ENCODE measurements at regions of chr3 and their contacts with region 1.

Region 1: DNA sequence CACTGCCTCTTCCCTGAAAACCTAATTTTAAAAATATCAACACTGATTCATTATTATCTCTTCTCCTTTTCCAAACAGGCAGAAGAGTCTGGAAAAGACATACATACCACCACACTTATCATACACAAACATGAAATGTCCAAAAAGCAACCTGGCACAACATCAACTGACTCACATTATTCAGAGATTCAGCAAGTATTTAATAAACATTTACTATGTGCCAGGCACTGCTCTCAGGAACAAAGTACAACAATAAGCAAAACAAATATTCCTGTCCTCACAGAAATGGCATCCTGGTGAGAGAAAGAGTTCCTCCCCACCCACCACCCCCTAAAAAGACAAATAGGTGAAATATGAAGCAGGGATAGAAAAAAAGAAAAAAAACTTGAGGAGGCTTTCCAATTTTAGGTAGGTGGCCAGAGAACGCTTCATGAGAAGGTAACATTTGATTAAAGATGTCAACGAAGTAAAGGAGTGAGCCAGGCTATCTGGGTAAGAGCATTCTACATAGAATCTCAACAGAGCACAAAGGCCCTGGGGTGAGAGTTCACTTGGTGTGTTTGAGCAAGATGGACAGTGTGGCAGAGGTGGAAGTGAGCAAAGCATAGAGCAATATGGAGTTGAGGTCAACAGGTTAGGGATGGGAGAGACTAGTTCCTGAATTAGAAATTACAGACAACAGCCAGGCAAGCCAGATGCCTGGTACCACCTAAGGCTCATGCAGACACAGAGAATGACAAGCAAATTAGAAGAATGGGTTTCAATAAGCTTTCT is 141.7 kb downstream of the OSBPL10 start:
- DNase-seq: no peak
- ATAC-seq: no peak
- H3K4me3 ChIP-seq: no peak overlapping the region
- H3K4me3 Mint-ChIP-seq: no peak overlapping the region
- H3K27ac ChIP-seq: no peak overlapping the region
- H3K27ac Mint-ChIP-seq: peak overlapping the region; percentile 22
- H3K4me1 ChIP-seq: peaks cover 0 to 10% of the 10 kb centered on the region in 2 donors
- H3K4me1 Mint-ChIP-seq: peaks cover 50% of the 10 kb centered on the region
- H3K27me3 ChIP-seq: no peaks in the 10 kb centered on the region
- H3K27me3 Mint-ChIP-seq: no peaks in the 10 kb centered on the region
- CTCF ChIP-seq: no peak

Region 2: GRCh38 chr3:30059240-30059639 is 1780.1 kb before region 1 on chr3:
- CTCF ChIA-PET with region 1: no interaction called
- POLR2A ChIA-PET with region 1: no interaction called
- intact Hi-C with region 1: loop called (anchors 5 kb)
- DNase-seq: no peak
- ATAC-seq: no peak
- H3K4me3 ChIP-seq: no peak overlapping the region
- H3K4me3 Mint-ChIP-seq: no peak overlapping the region
- H3K27ac ChIP-seq: no peak overlapping the region
- H3K27ac Mint-ChIP-seq: no peak overlapping the region
- H3K4me1 ChIP-seq: no peaks in the 10 kb centered on the region
- H3K4me1 Mint-ChIP-seq: no peaks in the 10 kb centered on the region
- H3K27me3 ChIP-seq: no peaks in the 10 kb centered on the region
- H3K27me3 Mint-ChIP-seq: peaks cover 2% of the 10 kb centered on the region
- CTCF ChIP-seq: no peak

Region 3: GRCh38 chr3:33758864-33759263 is 1919.5 kb after region 1 on chr3:
- CTCF ChIA-PET with region 1: no interaction called
- POLR2A ChIA-PET with region 1: no interaction called
- intact Hi-C with region 1: no loop called
- DNase-seq: no peak
- ATAC-seq: no peak
- H3K4me3 ChIP-seq: no peak overlapping the region
- H3K4me3 Mint-ChIP-seq: no peak overlapping the region
- H3K27ac ChIP-seq: no peak overlapping the region
- H3K27ac Mint-ChIP-seq: no peak overlapping the region
- H3K4me1 ChIP-seq: no peaks in the 10 kb centered on the region
- H3K4me1 Mint-ChIP-seq: no peaks in the 10 kb centered on the region
- H3K27me3 ChIP-seq: peaks cover 0 to 3% (median 1%) of the 10 kb centered on the region in 4 experiments
- H3K27me3 Mint-ChIP-seq: peaks cover 17% of the 10 kb centered on the region
- CTCF ChIP-seq: no peak

Measured in B cell (primary cell).